ENCODE measurements at regions of chr2 and their contacts with region 1.

Region 1: DNA sequence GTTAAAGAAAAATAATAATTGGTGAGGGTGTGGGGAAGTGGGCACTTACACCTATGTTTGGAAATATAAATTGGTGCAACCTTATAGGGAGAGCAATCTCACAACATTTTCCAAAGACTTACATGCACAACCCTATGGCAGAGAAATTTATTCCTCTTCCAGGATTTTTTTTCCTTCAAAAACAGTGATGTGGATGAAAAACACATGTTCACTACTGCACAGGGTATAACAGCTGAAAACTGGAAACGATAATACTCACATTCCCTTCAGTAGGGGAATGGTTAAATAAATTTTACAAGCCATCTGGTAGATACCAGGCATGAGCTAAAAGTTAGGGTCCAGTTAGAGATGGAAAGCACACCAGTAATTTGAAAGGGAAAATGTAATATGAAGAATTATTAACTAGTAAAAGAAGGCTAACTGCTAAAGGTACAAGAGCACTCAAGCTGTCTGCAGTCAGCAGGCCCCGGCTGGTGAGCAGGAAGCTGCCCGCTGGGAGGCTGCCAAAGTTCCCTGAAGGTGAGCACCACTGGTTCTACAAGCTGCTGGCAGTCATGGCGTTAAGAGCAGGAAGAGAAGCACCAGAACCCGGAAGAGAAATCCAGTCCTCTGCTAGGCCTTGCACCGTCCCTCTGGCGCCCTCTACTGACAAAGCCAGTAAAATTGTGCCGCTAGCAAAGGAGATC is 28.4 kb upstream of the CASP8 start:
- DNase-seq: peak; percentile 96 to 97 (median 97)
- H3K4me3 ChIP-seq: peak overlapping the region in 3 of 7 experiments; percentile 4 to 53 (median 35)
- H3K27ac ChIP-seq: peak overlapping the region in 1 of 2 experiments; percentile 62
- H3K4me1 ChIP-seq: peaks cover 31 to 73% (median 57%) of the 10 kb centered on the region in 4 experiments
- H3K27me3 ChIP-seq: no peaks in the 10 kb centered on the region

Region 2: GRCh38 chr2:200901459-200902072 is 330.4 kb before region 1 on chr2:
- CTCF ChIA-PET with region 1: interaction called, 12 read pairs
- POLR2A ChIA-PET with region 1: no interaction called
- DNase-seq: peak; percentile 92 to 96 (median 94)
- H3K4me3 ChIP-seq: no peak overlapping the region
- H3K27ac ChIP-seq: no peak overlapping the region
- H3K4me1 ChIP-seq: peaks cover 0 to 4% (median 0%) of the 10 kb centered on the region in 4 experiments
- H3K27me3 ChIP-seq: no peaks in the 10 kb centered on the region

Region 3: DNA sequence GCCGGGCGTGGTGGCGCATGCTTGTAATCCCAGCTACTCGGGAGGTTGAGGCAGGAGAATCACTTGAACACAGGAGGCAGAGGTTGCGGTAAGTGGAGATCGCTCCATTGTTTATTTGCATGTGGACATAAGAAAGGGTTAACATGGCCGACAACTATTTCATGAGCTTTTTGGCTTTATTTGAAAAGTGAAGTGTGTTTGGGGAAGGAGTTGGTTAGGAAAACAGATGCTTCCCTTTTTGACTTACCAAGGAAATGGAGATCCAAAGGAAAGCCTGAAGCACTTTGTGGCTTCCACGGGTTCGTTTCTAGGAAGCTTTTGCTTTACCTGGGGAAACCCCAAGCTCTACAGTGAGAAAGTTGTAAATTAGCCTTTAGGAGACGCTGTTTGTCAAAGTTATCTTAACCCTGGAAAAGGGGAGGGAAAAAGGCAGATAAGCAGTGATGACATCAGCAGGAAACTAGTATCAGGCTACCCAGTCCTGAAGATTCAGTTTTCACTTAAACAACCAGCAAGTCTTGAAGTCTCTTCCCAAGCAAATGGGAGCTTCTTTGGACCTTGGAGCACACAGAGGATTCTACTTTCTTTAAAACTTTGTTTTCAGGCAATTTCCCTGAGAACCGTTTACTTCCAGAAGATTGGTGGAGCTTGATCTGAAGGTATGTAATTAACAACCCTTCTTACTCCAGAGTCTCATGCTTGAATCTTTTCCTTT is 49.1 kb before region 1 on chr2 and contains the start of gene CASP10:
- CTCF ChIA-PET with region 1: interaction called, 80 read pairs
- POLR2A ChIA-PET with region 1: interaction called, 12 read pairs
- DNase-seq: peak; percentile 92 to 95 (median 95)
- H3K4me3 ChIP-seq: peak within 1 kb of the TSS; percentile 14 to 100 (median 79)
- H3K27ac ChIP-seq: peak within 1 kb of the TSS; percentile 78 to 90
- H3K4me1 ChIP-seq: peaks cover 29 to 46% (median 30%) of the 10 kb centered on the region in 4 experiments
- H3K27me3 ChIP-seq: no peaks in the 10 kb centered on the region

Region 4: DNA sequence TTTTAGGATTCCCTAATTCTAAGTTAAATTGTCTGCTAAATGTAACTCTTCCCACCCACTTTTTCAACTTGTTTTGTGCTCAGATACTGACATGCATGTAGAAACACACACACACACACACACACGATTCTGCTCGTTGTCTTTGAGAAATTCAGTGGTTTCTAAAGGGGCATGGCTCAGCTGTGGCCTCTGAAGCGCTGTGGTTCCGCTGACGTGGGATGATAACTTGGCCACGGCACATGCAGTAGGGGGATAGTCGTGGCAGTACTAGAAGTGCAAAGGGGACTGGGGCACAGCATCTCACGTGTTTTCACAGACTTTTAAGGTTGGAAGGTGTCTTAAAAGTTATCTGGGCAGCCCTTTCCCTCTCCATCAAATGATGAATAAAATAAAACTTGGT is 30.6 kb before region 1 on chr2:
- CTCF ChIA-PET with region 1: interaction called, 43 read pairs
- POLR2A ChIA-PET with region 1: no interaction called
- DNase-seq: no peak
- H3K4me3 ChIP-seq: no peak overlapping the region
- H3K27ac ChIP-seq: no peak overlapping the region
- H3K4me1 ChIP-seq: peaks cover 0 to 8% (median 6%) of the 10 kb centered on the region in 4 experiments
- H3K27me3 ChIP-seq: no peaks in the 10 kb centered on the region

Region 5: GRCh38 chr2:201257956-201258665 is 26.2 kb after region 1 on chr2:
- CTCF ChIA-PET with region 1: interaction called, 45 read pairs
- POLR2A ChIA-PET with region 1: interaction called, 6 read pairs
- DNase-seq: peak; percentile 93 to 99 (median 98)
- H3K4me3 ChIP-seq: peak overlapping the region; percentile 27 to 92 (median 68)
- H3K27ac ChIP-seq: peak overlapping the region; percentile 99
- H3K4me1 ChIP-seq: peaks cover 45 to 94% (median 86%) of the 10 kb centered on the region in 4 experiments
- H3K27me3 ChIP-seq: no peaks in the 10 kb centered on the region

Region 6: GRCh38 chr2:201363857-201364560 is 132.1 kb after region 1 on chr2:
- CTCF ChIA-PET with region 1: interaction called, 33 read pairs
- POLR2A ChIA-PET with region 1: no interaction called
- DNase-seq: peak; percentile 55 to 76 (median 74)
- H3K4me3 ChIP-seq: no peak overlapping the region
- H3K27ac ChIP-seq: no peak overlapping the region
- H3K4me1 ChIP-seq: peaks cover 0 to 2% (median 1%) of the 10 kb centered on the region in 4 experiments
- H3K27me3 ChIP-seq: no peaks in the 10 kb centered on the region